ENCODE measurements at regions of chr1 and their contacts with region 1.

Region 1: GRCh38 chr1:150561974-150562445 is 12.8 kb downstream of the ADAMTSL4 start:
- DNase-seq: peak; percentile 86
- H3K4me3 ChIP-seq: peak overlapping the region; percentile 56 to 69
- H3K27ac ChIP-seq: peak overlapping the region; percentile 99 to 100
- H3K4me1 ChIP-seq: peaks cover 35 to 40% of the 10 kb centered on the region in 2 experiments
- H3K27me3 ChIP-seq: no peaks in the 10 kb centered on the region
- CTCF ChIP-seq: no peak
- EP300 ChIP-seq: peak; percentile 85 to 95
- RAD21 ChIP-seq: no peak

Region 2: GRCh38 chr1:150515328-150516048 is 46.5 kb before region 1 on chr1 and contains the start of gene FALEC:
- CTCF ChIA-PET with region 1: interaction called, 19 read pairs
- POLR2A ChIA-PET with region 1: no interaction called
- DNase-seq: peak; percentile 99
- H3K4me3 ChIP-seq: peak within 1 kb of the TSS; percentile 59 to 70
- H3K27ac ChIP-seq: peak within 1 kb of the TSS; percentile 58 to 80
- H3K4me1 ChIP-seq: peaks cover 2 to 4% of the 10 kb centered on the region in 2 experiments; a peak in 1 of 4 replicates
- H3K27me3 ChIP-seq: no peaks in the 10 kb centered on the region
- CTCF ChIP-seq: no peak
- EP300 ChIP-seq: no peak
- RAD21 ChIP-seq: no peak
- polyA plus RNA-seq, gene FALEC: 0.50 and 0.72 TPM in 2 replicates

Region 3: GRCh38 chr1:150543500-150544141 is 18.4 kb before region 1 on chr1:
- CTCF ChIA-PET with region 1: interaction called, 88 read pairs
- POLR2A ChIA-PET with region 1: interaction called, 4 read pairs
- DNase-seq: peak; percentile 10
- H3K4me3 ChIP-seq: no peak overlapping the region
- H3K27ac ChIP-seq: no peak overlapping the region
- H3K4me1 ChIP-seq: peaks cover 0 to 4% of the 10 kb centered on the region in 2 experiments; a peak in 1 of 4 replicates
- H3K27me3 ChIP-seq: no peaks in the 10 kb centered on the region
- CTCF ChIP-seq: no peak
- EP300 ChIP-seq: no peak
- RAD21 ChIP-seq: no peak

Region 4: DNA sequence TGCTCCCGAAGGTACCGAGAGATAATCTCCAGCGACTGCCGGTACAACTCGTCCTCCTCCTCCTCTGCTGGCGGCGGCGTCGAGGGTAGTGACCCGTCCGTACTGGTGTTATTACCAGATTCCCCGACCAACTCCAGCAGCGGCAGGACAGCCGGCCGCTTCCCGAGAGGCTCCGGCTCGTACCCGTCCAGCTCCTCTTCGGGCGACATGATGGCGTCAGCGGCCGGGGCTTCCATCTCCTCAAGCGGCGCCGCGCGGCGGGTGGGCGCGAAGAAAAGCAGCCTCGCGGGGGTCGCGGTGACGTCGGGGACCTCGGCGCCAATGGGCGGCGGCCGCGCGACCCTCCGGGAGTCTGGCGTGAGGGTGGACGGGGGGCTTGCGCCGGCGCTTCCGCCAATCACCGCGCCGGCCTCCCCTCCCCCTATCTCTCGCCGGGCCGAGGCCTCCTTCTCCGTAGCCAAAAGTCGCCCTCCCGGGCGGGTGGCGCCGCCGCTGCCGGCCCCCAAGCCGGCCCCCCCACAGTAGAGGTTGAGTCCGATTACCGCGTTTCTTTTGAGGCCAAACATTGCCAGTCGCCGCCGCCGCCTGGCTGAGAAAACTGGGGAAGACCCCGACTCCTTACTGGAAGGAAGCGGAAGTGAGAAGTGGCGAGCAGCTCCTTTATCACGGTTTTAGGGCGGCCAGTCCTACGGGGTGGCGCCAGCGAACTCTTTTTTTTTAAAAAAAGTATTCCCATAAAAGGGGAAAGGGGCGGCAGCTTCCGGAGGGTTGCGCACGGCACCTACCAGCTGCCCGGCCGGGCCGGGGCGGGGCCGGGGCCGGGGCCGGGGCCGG is 17.2 kb after region 1 on chr1 and contains the start of gene MCL1:
- CTCF ChIA-PET with region 1: interaction called, 142 read pairs
- POLR2A ChIA-PET with region 1: interaction called, 149 read pairs
- DNase-seq: peak; percentile 94
- H3K4me3 ChIP-seq: peak within 1 kb of the TSS; percentile 95 to 98
- H3K27ac ChIP-seq: peak within 1 kb of the TSS; percentile 97 to 100
- H3K4me1 ChIP-seq: peaks cover 9 to 28% of the 10 kb centered on the region in 2 experiments; a peak in 3 of 4 replicates
- H3K27me3 ChIP-seq: no peaks in the 10 kb centered on the region
- CTCF ChIP-seq: no peak
- EP300 ChIP-seq: 0 out of 4 replicates have a peak, but pooled peaks of 1 of the 2 experiments have one; percentile 56
- RAD21 ChIP-seq: no peak
- polyA plus RNA-seq, gene MCL1: 110 and 131 TPM in 2 replicates

Region 5: DNA sequence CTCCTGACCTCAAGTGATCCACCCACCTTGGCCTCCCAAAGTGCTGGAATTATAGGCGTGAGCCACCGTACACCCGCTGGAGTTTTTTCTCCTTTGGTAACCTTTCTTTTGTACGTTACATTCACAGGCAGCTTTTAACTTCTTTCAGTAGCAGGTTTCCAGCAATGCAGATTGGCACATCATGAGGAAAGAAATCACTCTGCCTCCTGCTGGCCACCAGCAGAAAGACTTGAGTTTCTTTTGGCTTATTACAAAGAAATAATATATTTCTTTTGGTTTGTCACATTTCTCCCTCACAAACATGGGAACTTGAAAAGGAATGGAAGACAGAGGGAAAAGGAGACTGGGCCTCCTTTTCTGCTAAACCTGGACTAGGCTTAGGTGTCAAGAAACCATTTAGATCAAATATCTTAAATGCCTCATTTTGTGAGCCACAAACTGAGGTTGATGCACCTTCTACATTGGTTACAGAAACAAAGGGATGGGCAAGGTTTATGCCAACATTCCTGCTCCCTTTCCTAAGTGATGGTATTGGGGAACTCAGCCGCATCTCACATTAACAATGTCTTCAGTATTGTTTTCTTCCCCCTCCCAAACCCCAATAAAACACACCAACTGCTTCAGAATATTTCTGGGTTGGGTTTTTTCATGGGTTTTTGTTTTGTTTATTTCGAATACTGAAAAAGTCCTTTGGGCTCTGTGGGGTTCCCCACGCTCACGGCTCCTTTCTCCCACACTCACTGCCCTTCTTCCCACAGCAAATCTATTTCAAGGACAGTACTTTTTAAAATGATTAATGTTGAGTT is 59.7 kb after region 1 on chr1:
- CTCF ChIA-PET with region 1: interaction called, 58 read pairs
- POLR2A ChIA-PET with region 1: interaction called, 3 read pairs
- DNase-seq: peak; percentile 47
- H3K4me3 ChIP-seq: no peak overlapping the region
- H3K27ac ChIP-seq: peak overlapping the region in 1 of 2 experiments; percentile 72; a peak in 1 of 4 replicates
- H3K4me1 ChIP-seq: peaks cover 10 to 22% of the 10 kb centered on the region in 2 experiments
- H3K27me3 ChIP-seq: no peaks in the 10 kb centered on the region
- CTCF ChIP-seq: peak; percentile 82
- EP300 ChIP-seq: no peak
- RAD21 ChIP-seq: peak; percentile 57

Region 6: DNA sequence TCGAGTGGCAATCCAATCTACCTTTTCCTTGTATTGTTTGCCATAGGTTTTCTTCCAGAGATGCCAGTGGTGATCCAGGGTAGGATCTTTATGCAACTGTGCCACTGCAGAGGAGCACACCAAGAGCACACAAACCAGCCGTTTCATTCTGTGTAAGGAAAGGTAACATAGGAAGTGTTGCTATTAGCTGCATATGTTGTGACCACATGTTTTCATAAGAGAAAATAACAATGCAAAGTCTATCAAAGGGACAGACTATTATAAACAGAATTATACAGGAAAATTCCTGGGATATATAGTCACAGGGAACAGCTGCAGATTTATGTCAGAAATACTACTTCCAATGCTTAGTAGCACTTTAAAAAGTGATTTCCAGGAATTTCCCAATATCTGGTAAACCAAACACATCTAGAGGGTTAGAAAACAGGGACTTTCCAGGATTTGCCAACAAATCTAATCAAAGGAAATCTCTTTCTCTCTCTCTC is 202.6 kb after region 1 on chr1:
- CTCF ChIA-PET with region 1: no interaction called
- POLR2A ChIA-PET with region 1: no interaction called
- DNase-seq: no peak
- H3K4me3 ChIP-seq: peak overlapping the region in 1 of 2 experiments; percentile 10; a peak in 2 of 4 replicates
- H3K27ac ChIP-seq: peak overlapping the region; percentile 56 to 91
- H3K4me1 ChIP-seq: peaks cover 0 to 5% of the 10 kb centered on the region in 2 experiments; a peak in 2 of 4 replicates
- H3K27me3 ChIP-seq: no peaks in the 10 kb centered on the region
- CTCF ChIP-seq: no peak
- EP300 ChIP-seq: no peak
- RAD21 ChIP-seq: no peak

Region 7: GRCh38 chr1:150813058-150813707 is 251.2 kb after region 1 on chr1:
- CTCF ChIA-PET with region 1: interaction called, 17 read pairs
- POLR2A ChIA-PET with region 1: no interaction called
- DNase-seq: peak; percentile 55
- H3K4me3 ChIP-seq: no peak overlapping the region; a peak in 1 of 4 replicates
- H3K27ac ChIP-seq: no peak overlapping the region
- H3K4me1 ChIP-seq: no peaks in the 10 kb centered on the region
- H3K27me3 ChIP-seq: no peaks in the 10 kb centered on the region
- CTCF ChIP-seq: peak; percentile 75
- EP300 ChIP-seq: no peak
- RAD21 ChIP-seq: peak; percentile 85

Region 8: DNA sequence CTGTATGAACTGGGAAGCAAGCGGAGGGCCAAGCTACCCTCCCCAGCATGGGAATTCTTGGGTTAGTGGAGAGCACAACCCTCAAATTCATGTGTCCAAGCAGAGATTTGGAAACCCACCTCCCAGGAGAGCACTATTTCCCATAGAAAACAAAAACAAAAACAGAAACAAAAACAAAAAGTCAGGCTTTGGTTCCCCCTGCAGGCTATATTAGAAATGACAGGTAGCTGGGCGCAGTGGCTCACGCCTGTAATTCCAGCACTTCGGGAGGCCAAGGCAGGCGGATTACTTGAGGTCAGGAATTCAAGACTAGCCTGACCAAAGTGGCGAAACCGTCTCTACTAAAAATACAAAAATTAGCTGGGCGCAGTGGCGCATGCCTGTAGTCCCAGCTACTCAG is 433.9 kb after region 1 on chr1:
- CTCF ChIA-PET with region 1: interaction called, 11 read pairs
- POLR2A ChIA-PET with region 1: no interaction called
- DNase-seq: peak; percentile 43
- H3K4me3 ChIP-seq: peak overlapping the region in 1 of 2 experiments; percentile 25; a peak in 1 of 4 replicates
- H3K27ac ChIP-seq: no peak overlapping the region
- H3K4me1 ChIP-seq: no peaks in the 10 kb centered on the region
- H3K27me3 ChIP-seq: no peaks in the 10 kb centered on the region
- CTCF ChIP-seq: peak; percentile 86
- EP300 ChIP-seq: no peak
- RAD21 ChIP-seq: peak; percentile 60

Measured in SK-N-SH (cell line).